ENCODE measurements at regions of chr18 and their contacts with region 1.

Region 1: GRCh38 chr18:61551586-61551985 is 218.4 kb downstream of the CDH20 start:
- DNase-seq: no peak
- ATAC-seq: peak; percentile 81

Region 2: DNA sequence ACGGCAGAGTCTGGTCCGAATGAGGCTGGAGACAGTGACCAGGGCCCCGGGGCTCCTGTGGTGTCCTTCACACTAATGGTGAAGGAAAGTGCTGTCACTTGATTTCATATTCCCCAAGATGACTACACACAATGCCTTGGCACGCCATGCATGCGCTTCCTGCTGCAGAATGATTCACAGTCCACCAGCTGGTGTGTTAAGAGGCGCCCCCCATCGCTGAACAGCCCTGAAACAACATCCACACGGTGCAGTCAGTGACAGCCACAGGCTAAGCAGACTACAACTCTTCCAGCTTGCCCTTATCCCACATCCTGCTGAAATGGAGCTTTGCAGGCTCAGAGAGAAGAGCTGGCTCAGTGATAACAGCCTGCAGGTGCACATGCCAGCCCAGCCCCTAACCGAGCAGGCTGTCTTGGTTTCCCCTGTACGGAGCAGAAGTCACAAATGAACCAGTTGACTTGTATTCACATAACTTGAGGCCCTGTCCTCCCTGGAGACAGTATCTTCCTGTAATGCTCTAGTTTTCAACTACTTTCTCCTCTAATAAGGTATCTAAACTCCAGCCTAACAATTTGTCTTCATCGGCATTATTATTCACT is 242.7 kb before region 1 on chr18:
- intact Hi-C with region 1: no loop called
- DNase-seq: peak; percentile 62
- ATAC-seq: no peak

Region 3: DNA sequence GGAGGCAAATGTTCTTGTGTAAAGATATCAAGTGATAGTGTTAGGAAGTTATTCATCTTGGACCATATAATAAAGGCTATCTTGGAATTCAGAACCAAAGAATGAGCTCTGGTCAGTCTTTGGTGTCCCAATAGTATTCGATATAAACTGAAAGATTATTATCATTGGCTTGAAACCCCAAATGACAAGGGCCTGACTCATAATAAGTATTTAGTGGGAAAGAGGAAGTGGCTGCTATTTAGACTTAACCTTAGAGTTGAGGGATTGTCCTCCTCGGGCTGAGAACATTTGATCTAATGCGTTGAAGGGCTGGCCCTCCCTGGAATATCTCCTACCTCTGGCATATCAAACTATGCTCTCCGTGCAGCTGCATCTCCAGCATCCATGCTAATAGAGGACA is 150.9 kb before region 1 on chr18:
- intact Hi-C with region 1: no loop called
- DNase-seq: no peak
- ATAC-seq: no peak

Region 4: DNA sequence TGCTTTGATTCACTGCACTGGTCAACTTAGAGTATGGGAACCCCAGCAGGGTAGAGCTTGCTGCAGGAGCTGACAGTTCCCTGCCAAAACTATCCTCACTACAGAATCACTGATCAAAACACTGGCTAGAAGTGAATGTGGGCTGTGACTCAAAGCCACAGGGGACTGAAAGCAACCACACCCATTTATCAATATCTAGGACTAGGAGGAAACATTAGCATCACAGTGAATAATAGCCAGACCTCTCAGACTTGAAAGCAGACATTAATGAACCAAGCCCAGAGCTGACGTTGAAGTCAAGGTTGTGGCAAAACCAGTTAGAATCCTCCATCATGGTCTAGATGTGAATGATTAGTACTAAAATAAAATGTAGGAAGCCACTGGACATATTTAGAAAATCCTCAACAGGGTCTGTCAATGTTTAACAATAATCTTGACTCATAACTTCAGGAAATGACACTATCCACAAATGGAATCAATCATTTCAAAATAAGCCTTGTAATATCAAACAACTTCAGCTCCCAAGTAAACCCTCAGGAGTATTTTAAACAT is 87.0 kb before region 1 on chr18:
- intact Hi-C with region 1: no loop called
- DNase-seq: no peak
- ATAC-seq: no peak

Region 5: GRCh38 chr18:61901323-61901986 is 349.9 kb after region 1 on chr18:
- intact Hi-C with region 1: loop called (anchors 5 kb)
- DNase-seq: no peak
- ATAC-seq: peak; percentile 53

Measured in Right ventricle myocardium inferior (tissue), 1 donor.